ENCODE measurements at regions of chr3 and their contacts with region 1.

Region 1: DNA sequence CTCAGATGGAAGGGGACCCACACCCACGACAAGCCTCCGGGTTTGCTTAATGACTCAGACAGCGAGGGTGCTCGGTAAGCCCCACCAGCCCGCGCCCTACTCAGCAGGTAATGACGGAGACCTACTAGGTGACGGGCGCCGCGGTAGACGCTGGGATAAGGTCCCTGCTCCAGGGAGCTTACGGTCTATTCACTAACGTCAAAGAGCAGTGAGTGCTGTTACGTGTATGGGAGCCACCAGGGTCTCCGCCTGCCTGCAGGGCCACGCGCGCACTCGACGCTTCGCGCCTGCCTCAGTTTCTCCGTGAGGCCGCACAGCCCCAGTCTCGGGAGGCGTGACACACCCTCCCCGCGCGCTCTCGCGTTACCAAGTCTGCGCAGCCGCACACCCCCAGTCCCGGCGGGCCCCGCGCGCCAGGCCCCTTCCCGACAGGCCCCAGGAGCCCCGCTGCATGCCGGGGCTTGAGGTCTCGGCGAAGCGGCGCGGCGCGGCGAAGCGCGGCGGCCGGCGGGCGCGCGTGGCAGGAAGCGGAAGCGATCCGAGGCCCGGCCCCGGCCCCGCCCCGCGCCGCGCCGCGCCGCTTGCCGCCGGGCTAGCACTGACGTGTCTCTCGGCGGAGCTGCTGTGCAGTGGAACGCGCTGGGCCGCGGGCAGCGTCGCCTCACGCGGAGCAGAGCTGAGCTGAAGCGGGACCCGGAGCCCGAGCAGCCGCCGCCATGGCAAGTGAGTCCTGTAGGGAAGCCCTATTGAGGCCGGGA is at the start of gene SEC61A1:
- DNase-seq: peak; percentile 91 to 97 (median 94)
- ATAC-seq: peak; percentile 93
- H3K4me3 ChIP-seq: peak within 1 kb of the TSS; percentile 95
- H3K4me3 Mint-ChIP-seq: peak within 1 kb of the TSS; percentile 99
- H3K27ac ChIP-seq: peak within 1 kb of the TSS; percentile 72 to 73
- H3K27ac Mint-ChIP-seq: peak within 1 kb of the TSS; percentile 88
- H3K4me1 ChIP-seq: peaks cover 37% of the 10 kb centered on the region
- H3K4me1 Mint-ChIP-seq: peaks cover 47% of the 10 kb centered on the region
- H3K27me3 ChIP-seq: no peaks in the 10 kb centered on the region
- H3K27me3 Mint-ChIP-seq: no peaks in the 10 kb centered on the region
- CTCF ChIP-seq: no peak
- total RNA-seq, gene SEC61A1: 127 to 139 TPM

Region 2: DNA sequence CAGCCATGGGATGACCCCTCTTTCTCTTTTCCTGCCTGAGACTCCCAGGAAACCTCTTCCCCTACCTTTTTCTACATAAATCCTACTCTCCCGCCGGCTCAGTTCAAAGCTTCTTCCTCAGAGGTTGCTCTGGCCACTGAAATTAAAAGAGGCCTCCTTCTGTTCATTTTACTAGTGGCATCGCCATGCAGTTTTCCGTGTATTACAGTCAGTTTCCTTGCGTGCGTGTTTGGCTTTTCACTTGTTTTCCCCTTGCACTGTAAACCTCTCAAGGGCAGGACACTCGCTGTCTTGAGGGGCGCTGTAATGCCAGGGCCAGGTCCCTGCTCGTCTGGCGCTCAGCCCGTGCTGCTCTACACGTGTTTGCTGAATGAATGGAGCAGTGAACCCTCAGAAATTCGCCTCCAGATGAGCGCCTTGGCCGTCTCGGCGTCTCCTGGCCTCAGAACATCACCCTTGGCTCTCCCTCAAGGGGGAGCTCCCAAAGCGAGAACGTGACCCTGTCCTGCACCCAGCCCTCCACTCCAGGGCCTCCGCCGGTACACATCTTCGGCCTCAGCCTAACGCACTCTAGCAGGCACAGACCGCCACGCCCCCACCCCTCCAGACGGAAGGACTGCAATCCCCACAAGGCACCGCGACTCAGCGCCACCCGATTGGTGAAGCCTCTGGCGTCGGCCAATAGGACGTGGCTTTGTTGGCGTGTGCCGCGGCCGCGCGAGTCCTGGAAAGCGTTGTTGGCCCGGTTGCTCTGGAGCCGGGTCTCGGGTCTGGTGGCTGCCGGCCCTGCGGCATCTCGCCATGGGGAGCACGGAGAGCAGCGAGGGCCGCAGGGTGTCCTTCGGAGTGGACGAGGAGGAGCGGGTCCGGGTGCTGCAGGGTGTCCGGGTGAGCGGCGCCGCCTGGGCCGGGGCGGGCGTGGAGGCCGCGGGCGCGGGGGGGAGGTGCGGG is 1348.2 kb before region 1 on chr3 and contains the start of gene CHCHD6:
- CTCF ChIA-PET with region 1: no interaction called
- POLR2A ChIA-PET with region 1: no interaction called
- intact Hi-C with region 1: loop called in 1 of 2 experiments (anchors 5 kb)
- DNase-seq: peak; percentile 93 to 98 (median 96)
- ATAC-seq: peak; percentile 94
- H3K4me3 ChIP-seq: peak within 1 kb of the TSS; percentile 81
- H3K4me3 Mint-ChIP-seq: peak within 1 kb of the TSS; percentile 98
- H3K27ac ChIP-seq: no peak within 1 kb of the TSS
- H3K27ac Mint-ChIP-seq: peak within 1 kb of the TSS; percentile 70
- H3K4me1 ChIP-seq: peaks cover 19% of the 10 kb centered on the region
- H3K4me1 Mint-ChIP-seq: peaks cover 31% of the 10 kb centered on the region
- H3K27me3 ChIP-seq: peaks cover 0 to 4% of the 10 kb centered on the region in 2 experiments
- H3K27me3 Mint-ChIP-seq: peaks cover 21% of the 10 kb centered on the region
- CTCF ChIP-seq: peak; percentile 25
- total RNA-seq, gene CHCHD6: 8.7 to 9.3 TPM

Region 3: GRCh38 chr3:127590593-127591477 is 461.2 kb before region 1 on chr3 and contains the start of gene TPRA1:
- CTCF ChIA-PET with region 1: no interaction called
- POLR2A ChIA-PET with region 1: no interaction called
- intact Hi-C with region 1: loop called in 1 of 2 experiments (anchors 5 kb)
- DNase-seq: peak; percentile 51 to 93 (median 74)
- ATAC-seq: peak; percentile 89
- H3K4me3 ChIP-seq: peak within 1 kb of the TSS; percentile 71
- H3K4me3 Mint-ChIP-seq: peak within 1 kb of the TSS; percentile 99
- H3K27ac ChIP-seq: peak within 1 kb of the TSS; percentile 54 to 82
- H3K27ac Mint-ChIP-seq: peak within 1 kb of the TSS; percentile 93
- H3K4me1 ChIP-seq: peaks cover 36% of the 10 kb centered on the region
- H3K4me1 Mint-ChIP-seq: peaks cover 43% of the 10 kb centered on the region
- H3K27me3 ChIP-seq: no peaks in the 10 kb centered on the region
- H3K27me3 Mint-ChIP-seq: no peaks in the 10 kb centered on the region
- CTCF ChIP-seq: no peak
- total RNA-seq, gene TPRA1: 7.5 to 7.8 TPM

Region 4: DNA sequence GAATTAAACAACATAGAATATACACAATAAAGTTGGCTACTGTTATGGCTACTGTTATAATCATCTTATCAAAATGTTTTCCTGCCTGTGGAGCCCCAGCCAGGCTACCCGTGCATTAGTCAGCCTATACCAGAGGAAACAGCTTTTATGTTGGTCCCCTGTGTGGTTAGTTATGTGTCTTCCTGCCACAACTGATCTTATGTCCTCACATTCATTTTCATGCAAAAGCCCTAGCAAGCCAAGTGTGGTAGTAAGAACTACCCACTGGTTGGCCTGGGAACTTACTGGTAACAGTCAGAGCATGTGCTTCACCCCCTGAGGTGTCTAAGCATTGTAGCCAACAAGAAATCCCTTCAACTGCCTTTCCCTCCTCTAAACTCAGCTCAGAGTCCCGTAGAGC is 251.5 kb before region 1 on chr3:
- CTCF ChIA-PET with region 1: no interaction called
- POLR2A ChIA-PET with region 1: no interaction called
- intact Hi-C with region 1: no loop called
- DNase-seq: peak in 1 of 14 experiments; percentile 30
- ATAC-seq: peak; percentile 34
- H3K4me3 ChIP-seq: no peak overlapping the region
- H3K4me3 Mint-ChIP-seq: no peak overlapping the region
- H3K27ac ChIP-seq: no peak overlapping the region
- H3K27ac Mint-ChIP-seq: no peak overlapping the region
- H3K4me1 ChIP-seq: peaks cover 4% of the 10 kb centered on the region
- H3K4me1 Mint-ChIP-seq: peaks cover 9% of the 10 kb centered on the region
- H3K27me3 ChIP-seq: no peaks in the 10 kb centered on the region
- H3K27me3 Mint-ChIP-seq: peaks cover 6% of the 10 kb centered on the region
- CTCF ChIP-seq: no peak

Region 5: DNA sequence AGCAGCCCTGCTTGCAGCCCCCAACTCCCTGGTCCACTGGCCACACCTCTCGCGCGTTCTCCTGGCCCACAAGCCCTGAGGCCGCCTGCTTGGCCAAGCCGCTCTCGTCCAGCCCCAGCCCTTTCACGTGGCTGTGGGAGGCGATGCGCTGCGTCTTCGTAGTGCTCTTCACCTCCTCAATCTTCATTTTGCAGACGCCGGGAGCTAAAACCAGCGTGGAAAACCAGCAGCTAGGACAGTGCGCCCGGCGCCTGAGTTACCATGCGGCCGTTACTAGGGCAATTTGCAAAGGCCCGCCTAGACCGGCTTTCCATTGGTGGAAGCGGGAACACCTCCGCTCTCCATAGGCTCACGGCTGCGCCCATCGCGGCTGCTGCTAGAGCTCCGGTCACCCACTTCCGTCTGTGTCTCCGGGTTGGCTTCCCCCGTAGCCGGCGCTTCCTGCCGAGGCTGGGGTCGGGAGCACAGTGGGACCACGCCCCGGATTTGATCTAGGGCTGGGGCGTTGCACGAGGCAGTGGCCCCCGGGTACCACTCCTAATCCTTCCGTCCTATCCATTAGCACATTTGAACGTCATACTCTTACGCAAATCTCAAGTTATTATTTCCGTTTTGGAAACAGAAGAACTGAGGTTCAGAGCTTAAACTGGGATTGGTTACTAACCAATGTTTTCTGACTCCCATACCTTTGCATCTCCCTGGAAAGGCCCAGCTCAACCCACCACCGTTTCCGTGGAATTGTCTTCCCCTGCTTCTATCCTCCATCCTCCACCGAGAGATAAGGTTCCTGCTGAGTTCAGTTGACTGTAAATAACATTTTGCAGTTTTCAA is 71.7 kb after region 1 on chr3 and contains the start of gene RUVBL1:
- CTCF ChIA-PET with region 1: no interaction called
- POLR2A ChIA-PET with region 1: interaction called, 9 read pairs
- intact Hi-C with region 1: loop called in 1 of 2 experiments (anchors 2 kb)
- DNase-seq: peak; percentile 91 to 99 (median 95)
- ATAC-seq: peak; percentile 93
- H3K4me3 ChIP-seq: peak within 1 kb of the TSS; percentile 98
- H3K4me3 Mint-ChIP-seq: peak within 1 kb of the TSS; percentile 95
- H3K27ac ChIP-seq: peak within 1 kb of the TSS; percentile 67 to 84
- H3K27ac Mint-ChIP-seq: peak within 1 kb of the TSS; percentile 93
- H3K4me1 ChIP-seq: peaks cover 21% of the 10 kb centered on the region
- H3K4me1 Mint-ChIP-seq: peaks cover 28% of the 10 kb centered on the region
- H3K27me3 ChIP-seq: no peaks in the 10 kb centered on the region
- H3K27me3 Mint-ChIP-seq: no peaks in the 10 kb centered on the region
- CTCF ChIP-seq: no peak
- total RNA-seq, gene RUVBL1: 5.6 to 7.7 TPM

Region 6: GRCh38 chr3:128464188-128464587 is 412.2 kb after region 1 on chr3:
- CTCF ChIA-PET with region 1: no interaction called
- POLR2A ChIA-PET with region 1: no interaction called
- intact Hi-C with region 1: no loop called
- DNase-seq: no peak
- ATAC-seq: no peak
- H3K4me3 ChIP-seq: no peak overlapping the region
- H3K4me3 Mint-ChIP-seq: no peak overlapping the region
- H3K27ac ChIP-seq: no peak overlapping the region
- H3K27ac Mint-ChIP-seq: no peak overlapping the region
- H3K4me1 ChIP-seq: no peaks in the 10 kb centered on the region
- H3K4me1 Mint-ChIP-seq: peaks cover 14% of the 10 kb centered on the region
- H3K27me3 ChIP-seq: peaks cover 0 to 2% of the 10 kb centered on the region in 2 experiments
- H3K27me3 Mint-ChIP-seq: peaks cover 23% of the 10 kb centered on the region
- CTCF ChIP-seq: no peak

Region 7: GRCh38 chr3:129893581-129894070 is 1841.6 kb after region 1 on chr3 and contains the start of gene TMCC1:
- CTCF ChIA-PET with region 1: no interaction called
- POLR2A ChIA-PET with region 1: no interaction called
- intact Hi-C with region 1: loop called in 1 of 2 experiments (anchors 5 kb)
- DNase-seq: peak; percentile 79 to 98 (median 88)
- ATAC-seq: peak; percentile 93
- H3K4me3 ChIP-seq: peak within 1 kb of the TSS; percentile 92
- H3K4me3 Mint-ChIP-seq: peak within 1 kb of the TSS; percentile 94
- H3K27ac ChIP-seq: peak within 1 kb of the TSS; percentile 78 to 87
- H3K27ac Mint-ChIP-seq: peak within 1 kb of the TSS; percentile 90
- H3K4me1 ChIP-seq: peaks cover 28% of the 10 kb centered on the region
- H3K4me1 Mint-ChIP-seq: peaks cover 51% of the 10 kb centered on the region
- H3K27me3 ChIP-seq: no peaks in the 10 kb centered on the region
- H3K27me3 Mint-ChIP-seq: no peaks in the 10 kb centered on the region
- CTCF ChIP-seq: no peak
- total RNA-seq, gene TMCC1: 33.3 to 33.8 TPM